GM12878 (cell line): ENCODE measurements at regions of chr14 and their contacts with region 1.

Region 1: DNA sequence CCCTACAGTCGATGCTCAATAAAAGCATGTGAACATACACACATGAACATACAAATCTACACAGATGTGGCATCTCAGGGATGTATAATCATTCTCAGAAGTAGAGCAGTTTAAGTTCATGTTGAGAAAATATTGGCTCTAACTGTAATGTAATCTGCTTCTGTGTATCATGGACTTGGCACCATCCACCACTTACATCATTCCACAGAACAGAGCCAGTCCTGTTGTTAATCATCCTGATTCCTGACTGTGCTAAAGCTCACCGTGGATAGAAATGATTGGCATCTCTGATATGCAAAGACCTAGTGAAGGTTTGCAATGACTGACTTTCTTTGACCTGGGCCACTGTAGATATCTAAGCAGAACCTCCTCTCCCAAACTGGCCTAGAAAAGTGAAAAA is 1141.3 kb downstream of the BCL11B start:
- DNase-seq: no peak
- ATAC-seq: no peak
- H3K4me3 ChIP-seq: no peak overlapping the region
- H3K27ac ChIP-seq: no peak overlapping the region
- H3K4me1 ChIP-seq: no peaks in the 10 kb centered on the region
- H3K27me3 ChIP-seq: no peaks in the 10 kb centered on the region
- CTCF ChIP-seq: no peak
- EP300 ChIP-seq: no peak
- POLR2A ChIP-seq: no peak
- RAD21 ChIP-seq: no peak

Region 2: GRCh38 chr14:98114122-98114895 is 16.4 kb before region 1 on chr14:
- CTCF ChIA-PET with region 1: interaction called, 4 read pairs
- POLR2A ChIA-PET with region 1: interaction called, 4 read pairs
- RAD21 ChIA-PET with region 1: interaction called, 3 read pairs
- SMC1A ChIA-PET with region 1: interaction called, 15 read pairs
- in situ Hi-C with region 1: no loop called
- intact Hi-C with region 1: no loop called
- DNase-seq: no peak
- ATAC-seq: no peak
- H3K4me3 ChIP-seq: no peak overlapping the region
- H3K27ac ChIP-seq: no peak overlapping the region
- H3K4me1 ChIP-seq: no peaks in the 10 kb centered on the region
- H3K27me3 ChIP-seq: no peaks in the 10 kb centered on the region
- CTCF ChIP-seq: no peak
- EP300 ChIP-seq: no peak
- POLR2A ChIP-seq: no peak
- RAD21 ChIP-seq: no peak